ENCODE measurements at regions of chr4 and their contacts with region 1.

Region 1: GRCh38 chr4:16852228-16852627 is 46.2 kb downstream of the LDB2 start:
- DNase-seq: peak; percentile 40
- H3K4me3 ChIP-seq: no peak overlapping the region
- H3K27ac ChIP-seq: no peak overlapping the region
- H3K4me1 ChIP-seq: peaks cover 27% of the 10 kb centered on the region
- H3K27me3 ChIP-seq: no peaks in the 10 kb centered on the region
- CTCF ChIP-seq: no peak
- POLR2A ChIP-seq: no peak

Region 2: GRCh38 chr4:16838226-16838875 is 13.9 kb before region 1 on chr4:
- CTCF ChIA-PET with region 1: interaction called, 10 read pairs
- POLR2A ChIA-PET with region 1: no interaction called
- dilution Hi-C with region 1: no loop called
- intact Hi-C with region 1: no loop called
- DNase-seq: no peak
- H3K4me3 ChIP-seq: no peak overlapping the region
- H3K27ac ChIP-seq: no peak overlapping the region
- H3K4me1 ChIP-seq: no peaks in the 10 kb centered on the region
- H3K27me3 ChIP-seq: no peaks in the 10 kb centered on the region
- CTCF ChIP-seq: no peak
- POLR2A ChIP-seq: no peak